ENCODE measurements at regions of chr16 and their contacts with region 1.

Region 1: GRCh38 chr16:24253192-24253591 is 2.9 kb upstream of the CACNG3 start:
- DNase-seq: peak in 11 of 14 experiments; percentile 2 to 69 (median 18)
- ATAC-seq: peak; percentile 58
- H3K4me3 ChIP-seq: no peak overlapping the region
- H3K4me3 Mint-ChIP-seq: no peak overlapping the region
- H3K27ac ChIP-seq: no peak overlapping the region
- H3K27ac Mint-ChIP-seq: no peak overlapping the region
- H3K4me1 ChIP-seq: no peaks in the 10 kb centered on the region
- H3K4me1 Mint-ChIP-seq: no peaks in the 10 kb centered on the region
- H3K27me3 ChIP-seq: peaks cover 31 to 50% of the 10 kb centered on the region in 2 experiments
- H3K27me3 Mint-ChIP-seq: peaks cover 50% of the 10 kb centered on the region
- CTCF ChIP-seq: peak; percentile 78

Region 2: DNA sequence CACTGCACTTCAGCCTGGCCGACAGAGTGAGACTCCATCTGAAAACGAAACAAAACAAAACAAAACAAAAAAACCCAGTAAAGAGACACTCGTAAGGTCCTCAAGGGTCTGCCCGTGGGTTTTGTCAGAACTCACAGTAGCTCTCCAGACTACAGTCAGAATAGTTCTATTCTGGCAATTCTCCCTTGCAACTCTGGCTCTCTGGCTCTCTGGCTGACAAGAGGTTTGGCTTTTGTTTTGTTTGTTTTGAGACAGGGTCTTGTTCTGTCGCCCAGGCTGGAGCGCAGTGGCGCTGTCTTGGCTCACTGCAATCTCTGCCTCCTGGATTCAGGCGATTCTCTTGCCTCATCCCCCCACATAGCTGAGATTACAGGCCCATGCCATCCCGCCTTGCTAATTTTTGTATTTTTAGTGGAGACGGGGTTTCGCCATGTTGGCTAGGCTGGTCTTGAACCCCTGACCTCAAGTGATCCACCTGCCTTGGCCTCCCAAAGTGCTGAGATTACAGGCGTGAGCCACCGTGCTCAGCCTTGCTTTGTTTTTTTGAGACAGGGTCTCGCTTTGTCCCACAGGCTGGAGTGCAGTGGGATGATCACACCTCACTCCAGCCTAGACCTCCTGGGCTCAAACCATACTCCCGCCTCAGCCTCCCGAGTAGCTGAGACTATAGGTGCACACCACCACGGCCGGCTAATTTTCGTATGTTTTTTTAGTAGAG is 518.9 kb before region 1 on chr16:
- CTCF ChIA-PET with region 1: interaction called, 3 read pairs
- POLR2A ChIA-PET with region 1: no interaction called
- intact Hi-C with region 1: loop called in 1 of 2 experiments (anchors 2 kb)
- DNase-seq: no peak
- ATAC-seq: no peak
- H3K4me3 ChIP-seq: no peak overlapping the region
- H3K4me3 Mint-ChIP-seq: no peak overlapping the region
- H3K27ac ChIP-seq: no peak overlapping the region
- H3K27ac Mint-ChIP-seq: no peak overlapping the region
- H3K4me1 ChIP-seq: peaks cover 3% of the 10 kb centered on the region
- H3K4me1 Mint-ChIP-seq: no peaks in the 10 kb centered on the region
- H3K27me3 ChIP-seq: no peaks in the 10 kb centered on the region
- H3K27me3 Mint-ChIP-seq: peaks cover 22% of the 10 kb centered on the region
- CTCF ChIP-seq: no peak

Region 3: DNA sequence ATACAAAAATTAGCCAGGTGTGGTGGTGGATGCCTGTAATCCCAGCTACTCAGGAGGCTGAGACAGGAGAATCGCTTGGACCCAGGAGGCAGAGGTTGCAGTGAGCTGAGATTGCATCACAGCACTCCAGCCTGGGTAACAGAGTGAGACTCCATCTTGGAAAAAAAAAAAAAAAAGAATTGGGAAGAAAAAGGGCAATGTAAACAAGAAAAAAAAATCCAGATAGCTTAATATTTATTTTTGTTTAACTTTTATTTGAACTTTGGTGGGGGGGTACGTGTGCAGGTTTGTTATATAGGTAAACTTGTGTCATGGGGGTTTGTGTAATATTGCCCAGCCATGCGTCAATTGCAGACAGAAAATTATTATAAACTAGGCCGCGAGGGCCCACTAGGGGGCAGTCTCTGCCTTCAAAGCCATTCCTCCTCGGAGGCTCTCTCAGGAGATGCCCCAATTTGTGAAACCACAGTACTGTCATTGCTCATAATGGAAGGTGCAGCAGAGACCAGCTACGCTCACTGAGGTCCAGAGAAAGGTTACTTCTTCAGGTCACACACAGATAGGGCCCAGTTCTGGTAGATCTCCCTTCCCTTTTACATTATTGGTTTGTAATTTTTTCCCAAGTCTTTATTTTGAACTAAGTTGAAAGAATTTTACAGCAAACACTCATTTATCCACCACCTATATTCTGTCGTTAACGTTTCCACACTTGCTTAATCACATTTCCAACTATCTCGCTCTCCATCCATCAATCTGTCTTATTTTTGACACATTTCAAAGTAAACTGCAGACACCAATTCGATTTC is 211.2 kb before region 1 on chr16:
- CTCF ChIA-PET with region 1: interaction called, 6 read pairs
- POLR2A ChIA-PET with region 1: no interaction called
- intact Hi-C with region 1: loop called (anchors 1 kb)
- DNase-seq: peak; percentile 50 to 82 (median 68)
- ATAC-seq: peak; percentile 78
- H3K4me3 ChIP-seq: no peak overlapping the region
- H3K4me3 Mint-ChIP-seq: no peak overlapping the region
- H3K27ac ChIP-seq: no peak overlapping the region
- H3K27ac Mint-ChIP-seq: no peak overlapping the region
- H3K4me1 ChIP-seq: no peaks in the 10 kb centered on the region
- H3K4me1 Mint-ChIP-seq: peaks cover 8% of the 10 kb centered on the region
- H3K27me3 ChIP-seq: no peaks in the 10 kb centered on the region
- H3K27me3 Mint-ChIP-seq: no peaks in the 10 kb centered on the region
- CTCF ChIP-seq: peak; percentile 71